Endothelial cell of umbilical vein (primary cell): ENCODE measurements at regions of chr19 and their contacts with region 1.

Region 1: GRCh38 chr19:44570984-44571684 is 41.7 kb upstream of the CEACAM20 start:
- DNase-seq: peak; percentile 82
- H3K4me3 ChIP-seq: no peak overlapping the region
- H3K27ac ChIP-seq: no peak overlapping the region
- H3K4me1 ChIP-seq: no peaks in the 10 kb centered on the region
- H3K27me3 ChIP-seq: peaks cover 7 to 18% of the 10 kb centered on the region in 2 experiments
- CTCF ChIP-seq: peak; percentile 71 to 82
- POLR2A ChIP-seq: no peak

Region 2: GRCh38 chr19:44401139-44402115 is 169.7 kb before region 1 on chr19 and contains the start of gene ZNF285:
- CTCF ChIA-PET with region 1: no interaction called
- POLR2A ChIA-PET with region 1: no interaction called
- dilution Hi-C with region 1: no loop called
- intact Hi-C with region 1: no loop called
- DNase-seq: peak; percentile 98
- H3K4me3 ChIP-seq: peak within 1 kb of the TSS; percentile 46 to 66 (median 55)
- H3K27ac ChIP-seq: no peak within 1 kb of the TSS
- H3K4me1 ChIP-seq: no peaks in the 10 kb centered on the region
- H3K27me3 ChIP-seq: no peaks in the 10 kb centered on the region
- CTCF ChIP-seq: no peak
- POLR2A ChIP-seq: peak; percentile 19
- total RNA-seq, gene ZNF285: 3.6 and 4.6 TPM in 2 replicates

Region 3: GRCh38 chr19:44582581-44583265 is 11.6 kb after region 1 on chr19:
- CTCF ChIA-PET with region 1: interaction called, 60 read pairs
- POLR2A ChIA-PET with region 1: interaction called, 4 read pairs
- dilution Hi-C with region 1: no loop called
- intact Hi-C with region 1: no loop called
- DNase-seq: no peak
- H3K4me3 ChIP-seq: no peak overlapping the region
- H3K27ac ChIP-seq: no peak overlapping the region
- H3K4me1 ChIP-seq: peaks cover 24% of the 10 kb centered on the region
- H3K27me3 ChIP-seq: no peaks in the 10 kb centered on the region
- CTCF ChIP-seq: peak; percentile 74 to 83
- POLR2A ChIP-seq: no peak

Region 4: GRCh38 chr19:44626048-44626624 is 55.0 kb after region 1 on chr19:
- CTCF ChIA-PET with region 1: interaction called, 12 read pairs
- POLR2A ChIA-PET with region 1: no interaction called
- dilution Hi-C with region 1: no loop called
- intact Hi-C with region 1: no loop called
- DNase-seq: peak; percentile 93
- H3K4me3 ChIP-seq: no peak overlapping the region
- H3K27ac ChIP-seq: peak overlapping the region; percentile 73
- H3K4me1 ChIP-seq: peaks cover 31% of the 10 kb centered on the region
- H3K27me3 ChIP-seq: no peaks in the 10 kb centered on the region
- CTCF ChIP-seq: no peak
- POLR2A ChIP-seq: peak; percentile 60

Region 5: DNA sequence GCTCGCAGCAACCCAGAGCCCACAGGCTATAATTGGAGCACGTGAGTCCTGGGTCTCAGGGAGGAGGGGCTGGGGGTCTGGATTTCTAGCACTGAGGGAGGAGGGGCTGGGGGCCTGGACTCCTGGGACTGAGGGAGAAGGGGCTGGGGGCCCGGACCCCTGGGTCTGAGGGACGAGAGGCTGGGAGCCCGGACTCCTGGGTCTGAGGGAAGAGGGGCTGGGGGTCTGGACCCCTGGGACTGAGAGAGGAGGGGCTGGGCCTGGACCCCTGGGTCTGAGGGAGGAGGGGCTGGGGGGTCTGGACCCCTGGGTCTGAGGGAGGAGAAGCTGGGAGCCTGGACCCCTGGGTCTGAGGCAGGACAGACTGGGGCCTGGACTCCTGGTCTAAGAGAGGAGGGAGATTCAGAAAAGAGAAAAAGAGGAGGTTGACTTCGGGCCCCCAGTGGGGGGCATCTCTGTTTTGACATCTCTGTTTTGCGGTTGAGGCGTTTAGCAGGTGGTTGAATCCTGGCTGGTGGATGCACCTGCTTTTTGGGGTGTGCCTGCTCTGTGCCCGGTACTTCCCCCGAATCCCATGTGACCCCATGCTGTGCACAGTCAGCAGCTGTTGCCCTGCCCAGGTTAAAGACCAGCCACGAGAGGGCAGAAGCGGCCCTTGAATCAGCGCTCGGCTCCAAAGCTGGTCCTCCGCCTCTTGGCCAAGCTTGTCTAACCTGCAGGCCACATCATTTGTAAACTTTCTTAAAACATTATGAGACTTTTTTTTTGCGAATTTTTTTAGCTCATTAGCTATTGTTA is 83.0 kb after region 1 on chr19:
- CTCF ChIA-PET with region 1: interaction called, 272 read pairs
- POLR2A ChIA-PET with region 1: interaction called, 4 read pairs
- dilution Hi-C with region 1: no loop called
- intact Hi-C with region 1: loop called (anchors 1 kb)
- DNase-seq: peak; percentile 48
- H3K4me3 ChIP-seq: no peak overlapping the region
- H3K27ac ChIP-seq: no peak overlapping the region
- H3K4me1 ChIP-seq: no peaks in the 10 kb centered on the region
- H3K27me3 ChIP-seq: no peaks in the 10 kb centered on the region
- CTCF ChIP-seq: peak; percentile 62 to 76
- POLR2A ChIP-seq: no peak

Region 6: DNA sequence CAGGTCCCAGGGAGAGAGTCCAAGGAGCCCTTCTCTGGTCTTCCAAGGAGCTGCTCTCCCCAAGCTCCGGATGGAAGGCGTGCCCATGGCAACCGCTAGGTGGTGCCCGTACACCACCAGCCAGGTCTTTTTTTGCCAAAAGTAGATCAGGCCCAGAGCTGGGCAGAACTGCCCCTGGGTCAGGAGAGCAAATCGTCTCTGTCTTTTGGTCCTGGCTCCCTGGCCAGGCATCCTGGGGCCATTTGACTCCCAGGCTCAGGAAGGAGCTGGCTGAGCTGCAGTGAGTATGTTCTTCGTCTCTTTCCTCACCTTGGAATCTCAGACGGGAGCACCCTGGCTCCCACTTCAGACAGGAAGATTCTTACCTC is 152.8 kb after region 1 on chr19:
- CTCF ChIA-PET with region 1: interaction called, 57 read pairs
- POLR2A ChIA-PET with region 1: no interaction called
- dilution Hi-C with region 1: no loop called
- intact Hi-C with region 1: no loop called
- DNase-seq: peak; percentile 81
- H3K4me3 ChIP-seq: no peak overlapping the region
- H3K27ac ChIP-seq: no peak overlapping the region
- H3K4me1 ChIP-seq: peaks cover 36% of the 10 kb centered on the region
- H3K27me3 ChIP-seq: no peaks in the 10 kb centered on the region
- CTCF ChIP-seq: peak; percentile 90 to 98
- POLR2A ChIP-seq: no peak

Region 7: GRCh38 chr19:44808463-44809371 is 237.6 kb after region 1 on chr19 and contains the start of gene BCAM:
- CTCF ChIA-PET with region 1: interaction called, 11 read pairs
- POLR2A ChIA-PET with region 1: no interaction called
- dilution Hi-C with region 1: no loop called
- intact Hi-C with region 1: no loop called
- DNase-seq: peak; percentile 49
- H3K4me3 ChIP-seq: peak within 1 kb of the TSS; percentile 60 to 66 (median 64)
- H3K27ac ChIP-seq: no peak within 1 kb of the TSS
- H3K4me1 ChIP-seq: peaks cover 16% of the 10 kb centered on the region
- H3K27me3 ChIP-seq: no peaks in the 10 kb centered on the region
- CTCF ChIP-seq: no peak
- POLR2A ChIP-seq: peak; percentile 68
- total RNA-seq, gene BCAM: 28.5 and 29.0 TPM in 2 replicates

Region 8: DNA sequence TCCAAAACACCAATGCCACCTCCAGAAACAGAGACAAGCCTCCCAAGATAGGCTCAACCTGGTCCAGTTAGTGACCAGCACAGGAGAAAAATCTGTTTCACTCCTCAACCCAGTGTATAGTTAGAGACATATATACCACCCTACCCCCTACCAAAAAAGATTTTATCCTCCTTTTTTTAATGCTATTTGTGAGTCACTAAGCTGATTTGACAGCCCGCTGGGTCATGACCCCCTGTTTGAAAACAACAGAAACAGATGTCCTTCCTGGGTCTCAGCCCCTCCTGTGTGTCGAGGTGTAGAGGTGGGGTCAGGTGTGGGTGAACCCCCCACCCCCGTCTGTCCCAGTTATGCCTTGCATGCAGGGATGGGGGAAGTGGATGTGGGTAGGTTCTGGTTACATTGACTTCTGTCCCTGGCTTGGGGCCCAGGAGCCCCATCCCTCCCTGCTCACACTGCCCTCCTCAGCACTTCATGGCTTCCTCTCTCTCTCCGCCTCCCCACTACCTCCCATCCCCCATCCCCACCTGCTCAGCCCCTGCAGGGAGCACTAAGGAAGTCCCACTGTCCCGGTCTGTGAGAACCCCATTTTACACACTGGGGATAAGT is 305.9 kb after region 1 on chr19:
- CTCF ChIA-PET with region 1: no interaction called
- POLR2A ChIA-PET with region 1: no interaction called
- dilution Hi-C with region 1: no loop called
- intact Hi-C with region 1: no loop called
- DNase-seq: no peak
- H3K4me3 ChIP-seq: no peak overlapping the region
- H3K27ac ChIP-seq: no peak overlapping the region
- H3K4me1 ChIP-seq: peaks cover 14% of the 10 kb centered on the region
- H3K27me3 ChIP-seq: no peaks in the 10 kb centered on the region
- CTCF ChIP-seq: no peak
- POLR2A ChIP-seq: no peak